ENCODE measurements at regions of chr5 and their contacts with region 1.

Region 1: DNA sequence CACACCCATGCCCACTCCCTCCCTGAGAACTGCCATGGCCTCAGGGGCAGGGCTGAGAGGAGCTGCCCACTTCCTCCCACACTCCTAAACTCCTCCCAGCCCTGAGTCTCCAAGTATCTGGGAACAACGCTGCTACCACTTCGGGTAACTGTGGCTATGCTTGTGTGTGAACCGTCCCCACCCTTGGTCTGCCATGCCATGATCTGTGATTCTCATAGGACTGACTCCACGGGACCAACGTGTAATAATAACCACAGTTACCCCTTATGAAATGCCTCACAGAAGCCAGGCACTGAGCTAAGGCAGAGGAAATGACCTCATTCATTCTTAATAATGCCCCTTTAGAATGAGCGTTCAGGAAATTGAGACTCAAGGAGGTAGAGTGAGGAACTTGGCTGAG is 103.9 kb upstream of the SMIM23 start:
- DNase-seq: no peak
- ATAC-seq: no peak
- H3K4me3 Mint-ChIP-seq: no peak overlapping the region
- H3K27ac Mint-ChIP-seq: no peak overlapping the region
- H3K4me1 Mint-ChIP-seq: peaks cover 17% of the 10 kb centered on the region
- H3K27me3 Mint-ChIP-seq: peaks cover 8% of the 10 kb centered on the region
- CTCF ChIP-seq: no peak

Region 2: DNA sequence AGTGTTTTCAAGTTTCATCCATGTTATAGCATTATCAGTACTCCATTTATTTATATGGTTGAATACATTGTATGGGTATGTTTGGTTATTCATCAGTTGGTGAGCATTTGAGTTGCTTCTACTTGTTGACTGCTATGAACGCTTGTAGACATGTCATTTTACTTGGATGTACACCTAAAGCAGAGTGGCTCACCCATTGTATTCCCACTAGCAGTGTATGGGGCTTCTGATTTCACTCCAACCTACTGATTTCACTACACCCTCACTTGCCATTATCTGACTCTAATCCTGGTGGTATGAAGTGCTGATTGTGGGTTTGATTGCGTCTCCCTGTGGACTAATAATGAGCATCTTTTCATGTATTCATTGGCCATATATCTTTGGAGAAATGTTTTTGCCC is 284.5 kb before region 1 on chr5:
- CTCF ChIA-PET with region 1: no interaction called
- POLR2A ChIA-PET with region 1: no interaction called
- DNase-seq: no peak
- ATAC-seq: no peak
- H3K4me3 Mint-ChIP-seq: peak overlapping the region; percentile 43; the same call in 1 of the 2 replicates
- H3K27ac Mint-ChIP-seq: no peak overlapping the region; the same call in 1 of the 2 replicates
- H3K4me1 Mint-ChIP-seq: peaks cover 72% of the 10 kb centered on the region
- H3K27me3 Mint-ChIP-seq: no peaks in the 10 kb centered on the region
- CTCF ChIP-seq: no peak

Region 3: GRCh38 chr5:171667341-171668096 is 14.2 kb before region 1 on chr5:
- CTCF ChIA-PET with region 1: interaction called, 10 read pairs
- POLR2A ChIA-PET with region 1: no interaction called
- DNase-seq: peak; percentile 61
- ATAC-seq: peak; percentile 96
- H3K4me3 Mint-ChIP-seq: no peak overlapping the region
- H3K27ac Mint-ChIP-seq: no peak overlapping the region
- H3K4me1 Mint-ChIP-seq: peaks cover 18% of the 10 kb centered on the region
- H3K27me3 Mint-ChIP-seq: no peaks in the 10 kb centered on the region
- CTCF ChIP-seq: no peak